Naive thymus-derived CD8-positive, alpha-beta T cell (primary cell): ENCODE measurements at regions of chr2 and their contacts with region 1.

Region 1: DNA sequence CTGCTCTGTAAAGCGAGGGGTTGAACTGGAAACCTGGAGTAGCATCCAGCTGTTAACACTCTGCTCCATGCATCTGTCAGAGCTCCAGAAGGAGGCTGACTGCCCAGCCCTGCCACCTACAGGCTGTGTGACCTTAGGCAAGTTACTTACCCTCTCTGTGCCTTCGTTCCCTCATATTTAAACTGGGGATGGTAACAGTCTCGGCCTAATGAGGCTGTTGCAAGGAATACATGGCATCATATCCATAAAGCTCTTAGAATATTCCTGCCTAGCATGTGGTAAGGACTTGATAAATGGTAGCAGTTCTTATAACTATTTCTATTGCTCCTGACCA is 80.6 kb downstream of the LRRFIP1 start:
- DNase-seq: no peak
- ATAC-seq: no peak
- H3K4me3 Mint-ChIP-seq: peak overlapping the region in 3 of 10 donors; percentile 27 to 55 (median 36)
- H3K27ac Mint-ChIP-seq: peak overlapping the region in 9 of 10 donors; percentile 36 to 91 (median 86)
- H3K4me1 Mint-ChIP-seq: peaks cover 35 to 73% (median 72%) of the 10 kb centered on the region in 4 donors
- H3K27me3 Mint-ChIP-seq: no peaks in the 10 kb centered on the region

Region 2: DNA sequence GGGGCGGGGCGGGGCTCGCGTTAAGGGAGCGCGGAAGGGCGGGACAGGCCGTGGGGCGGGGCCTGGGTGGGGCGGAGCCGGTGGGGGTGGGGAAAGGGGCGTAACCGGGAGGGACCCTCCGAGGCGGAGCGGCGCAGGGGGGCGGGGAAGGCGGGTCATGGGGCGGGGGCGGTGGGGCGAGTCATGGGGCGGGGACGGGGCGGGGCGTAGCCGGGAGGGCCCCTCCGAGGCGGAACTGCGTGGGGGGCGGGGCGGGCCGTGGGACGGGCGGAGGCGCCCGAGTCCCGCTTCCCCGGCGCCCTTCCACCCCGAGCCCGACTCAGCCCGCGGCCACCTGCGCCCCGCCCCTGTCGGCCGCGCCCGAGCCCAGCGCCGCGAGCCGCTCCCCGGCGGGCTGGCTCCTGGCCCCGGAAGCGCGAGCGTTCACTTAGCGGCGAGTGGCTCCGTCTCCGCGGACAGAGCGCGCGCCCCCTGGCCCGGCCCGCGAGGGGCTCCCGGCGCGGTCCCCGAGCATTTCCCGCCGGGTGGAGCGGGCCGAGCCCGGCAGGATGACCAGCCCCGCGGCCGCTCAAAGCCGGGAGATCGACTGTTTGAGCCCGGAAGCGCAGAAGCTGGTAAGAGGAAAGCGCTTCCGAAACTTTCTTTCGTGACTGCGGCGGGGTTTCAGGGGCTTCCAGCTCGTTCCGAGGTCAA is 16.0 kb before region 1 on chr2:
- POLR2A ChIA-PET with region 1: interaction called, 14 read pairs
- DNase-seq: peak; percentile 81 to 99 (median 91)
- ATAC-seq: peak; percentile 57 to 60
- H3K4me3 Mint-ChIP-seq: peak overlapping the region; percentile 83 to 98 (median 92)
- H3K27ac Mint-ChIP-seq: peak overlapping the region in 9 of 10 donors; percentile 91 to 100 (median 95)
- H3K4me1 Mint-ChIP-seq: peaks cover 39 to 82% (median 78%) of the 10 kb centered on the region in 4 donors
- H3K27me3 Mint-ChIP-seq: no peaks in the 10 kb centered on the region